ENCODE measurements at regions of chr9 and their contacts with region 1.

Region 1: GRCh38 chr9:129835021-129835871 is at the starts of genes C9orf78 and USP20:
- DNase-seq: peak; percentile 88 to 100 (median 94)

Region 2: DNA sequence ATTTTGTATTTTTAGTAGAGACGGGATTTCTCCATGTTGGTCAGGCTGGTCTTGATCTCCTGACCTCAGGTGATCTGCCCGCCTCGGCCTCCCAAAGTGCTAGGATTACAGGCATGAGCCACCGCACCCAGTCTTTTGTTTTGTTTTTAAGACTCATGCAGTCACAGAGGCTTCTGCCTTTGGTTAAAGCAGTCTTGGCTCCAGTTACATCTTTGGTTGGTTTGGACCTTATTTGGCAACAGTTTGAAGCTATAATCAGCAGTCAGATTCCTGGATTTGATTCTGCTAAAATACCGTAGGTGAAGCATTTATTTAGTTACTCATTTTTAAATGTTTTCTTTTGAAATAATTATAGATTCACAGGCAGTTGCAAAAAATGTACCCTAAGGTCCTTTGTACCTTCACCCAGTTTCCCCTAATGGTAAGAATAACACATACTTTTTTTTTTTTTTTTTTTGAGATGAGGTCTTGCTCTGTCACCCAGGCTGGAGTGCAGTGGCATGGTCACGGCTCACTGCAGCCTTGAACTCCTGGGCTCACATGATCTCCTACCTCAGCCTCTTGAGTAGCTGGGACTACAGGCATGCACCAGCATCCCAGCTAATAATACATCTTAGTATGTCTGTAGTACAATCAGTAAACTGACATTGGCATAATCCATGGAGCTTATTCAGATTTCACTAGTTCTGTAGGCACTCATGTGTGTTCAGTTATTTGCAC is 15.7 kb after region 1 on chr9:
- intact Hi-C with region 1: loop called (anchors 1 kb)
- DNase-seq: peak in 1 of 10 donors; percentile 48

Measured in posterior cingulate gyrus (tissue), 11 donors.